Mammary epithelial cell (primary cell): ENCODE measurements at regions of chr7 and their contacts with region 1.

Region 1: DNA sequence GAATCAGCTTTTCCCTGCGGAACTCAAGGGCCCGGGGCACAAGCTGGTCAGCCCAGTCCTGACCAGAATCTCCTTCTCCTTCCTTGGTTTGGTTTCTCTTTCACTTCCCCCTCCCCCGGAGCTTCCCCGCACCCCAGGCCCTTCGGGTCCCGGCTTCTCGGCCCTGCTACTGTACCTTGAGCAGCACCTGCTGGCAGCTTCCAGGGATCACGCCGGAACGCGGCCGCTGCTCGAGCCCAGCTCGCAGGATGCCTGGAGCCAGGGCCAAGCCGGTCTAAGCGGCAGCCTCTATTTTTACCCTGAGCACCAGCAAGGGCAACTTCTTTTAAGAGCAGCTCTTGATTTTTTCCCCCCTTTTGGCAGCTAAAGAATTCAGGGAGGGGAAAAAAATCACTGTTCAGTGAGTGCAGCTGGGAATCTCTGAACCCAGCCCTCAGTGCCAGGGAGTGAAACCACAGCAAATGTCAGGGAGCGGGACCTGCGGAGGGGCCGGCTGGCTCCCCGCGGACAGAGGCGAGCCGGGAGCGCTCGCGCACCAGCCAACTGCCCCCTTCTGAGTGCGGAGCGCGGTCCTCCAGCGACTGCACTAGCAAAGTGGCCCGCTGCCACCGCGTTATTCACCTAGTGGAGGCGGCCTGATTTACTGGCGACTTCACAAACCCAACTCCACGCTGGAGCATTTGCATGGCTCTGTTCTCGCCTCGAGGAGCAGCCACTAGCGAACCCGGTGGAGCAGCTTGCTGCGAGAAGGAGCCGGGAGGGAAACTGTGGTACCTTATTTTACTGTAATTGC is 2.4 kb upstream of the INHBA start:
- DNase-seq: peak; percentile 86
- H3K4me3 ChIP-seq: peak overlapping the region; percentile 48 to 59 (median 51)
- H3K27ac ChIP-seq: peak overlapping the region; percentile 62
- H3K4me1 ChIP-seq: peaks cover 22% of the 10 kb centered on the region
- H3K27me3 ChIP-seq: no peaks in the 10 kb centered on the region
- CTCF ChIP-seq: peak; percentile 75 to 96

Region 2: GRCh38 chr7:40329601-40330153 is 1375.6 kb before region 1 on chr7:
- CTCF ChIA-PET with region 1: no interaction called
- dilution Hi-C with region 1: loop called (anchors 5 kb)
- in situ Hi-C with region 1: loop called (anchors 5 to 10 kb)
- intact Hi-C with region 1: loop called (anchors 1 kb)
- DNase-seq: peak; percentile 49
- H3K4me3 ChIP-seq: no peak overlapping the region
- H3K27ac ChIP-seq: no peak overlapping the region
- H3K4me1 ChIP-seq: no peaks in the 10 kb centered on the region
- H3K27me3 ChIP-seq: no peaks in the 10 kb centered on the region
- CTCF ChIP-seq: peak; percentile 57 to 68

Region 3: DNA sequence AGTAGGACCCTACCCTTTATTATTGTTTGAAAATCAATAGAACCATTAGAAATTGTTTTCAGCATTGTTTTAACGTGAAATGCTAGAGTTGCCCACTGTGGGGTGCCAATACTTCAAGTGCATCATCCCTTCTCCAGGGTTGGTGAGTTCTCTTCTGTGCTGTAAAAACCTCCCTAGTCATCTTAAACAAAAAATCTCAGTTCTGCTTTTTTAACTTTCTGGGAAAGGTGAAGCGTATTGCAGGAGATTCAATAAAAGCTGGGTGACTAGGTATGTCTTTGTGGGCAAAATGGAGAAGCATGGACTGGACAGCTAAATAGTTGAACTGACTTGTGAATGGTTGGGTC is 871.4 kb before region 1 on chr7:
- CTCF ChIA-PET with region 1: no interaction called
- dilution Hi-C with region 1: no loop called
- in situ Hi-C with region 1: loop called in 1 of 2 experiments (anchors 25 kb)
- intact Hi-C with region 1: loop called (anchors 2 kb)
- DNase-seq: no peak
- H3K4me3 ChIP-seq: no peak overlapping the region
- H3K27ac ChIP-seq: no peak overlapping the region
- H3K4me1 ChIP-seq: peaks cover 23% of the 10 kb centered on the region
- H3K27me3 ChIP-seq: no peaks in the 10 kb centered on the region
- CTCF ChIP-seq: peak; percentile 26 to 45

Region 4: DNA sequence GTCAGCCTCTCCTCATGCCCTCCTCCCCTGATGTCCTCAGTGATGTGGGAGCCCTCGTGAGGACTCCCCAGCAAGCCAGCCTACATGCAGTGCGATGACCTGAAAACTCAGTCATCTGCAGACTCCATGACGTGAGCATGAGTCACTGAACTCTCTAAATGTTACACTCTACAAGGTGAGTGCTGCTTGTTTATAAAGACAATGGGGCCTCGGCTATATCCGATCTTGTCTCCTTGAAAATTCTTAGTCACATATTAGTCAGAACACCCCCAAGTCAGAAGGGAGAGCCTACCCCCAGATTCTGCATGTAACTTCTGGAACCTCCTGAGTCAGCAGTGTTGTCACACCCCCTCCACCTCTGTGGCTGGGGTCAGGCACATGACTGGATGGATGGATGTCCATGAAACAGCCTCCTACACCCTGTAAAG is 676.2 kb before region 1 on chr7:
- CTCF ChIA-PET with region 1: no interaction called
- dilution Hi-C with region 1: no loop called
- in situ Hi-C with region 1: no loop called
- intact Hi-C with region 1: loop called (anchors 1 kb)
- DNase-seq: peak; percentile 100
- H3K4me3 ChIP-seq: no peak overlapping the region
- H3K27ac ChIP-seq: peak overlapping the region; percentile 87
- H3K4me1 ChIP-seq: peaks cover 45% of the 10 kb centered on the region
- H3K27me3 ChIP-seq: no peaks in the 10 kb centered on the region
- CTCF ChIP-seq: no peak

Region 5: GRCh38 chr7:41148521-41148951 is 556.8 kb before region 1 on chr7:
- CTCF ChIA-PET with region 1: no interaction called
- dilution Hi-C with region 1: no loop called
- in situ Hi-C with region 1: no loop called
- intact Hi-C with region 1: loop called (anchors 1 kb)
- DNase-seq: peak; percentile 98
- H3K4me3 ChIP-seq: no peak overlapping the region
- H3K27ac ChIP-seq: peak overlapping the region; percentile 99
- H3K4me1 ChIP-seq: peaks cover 46% of the 10 kb centered on the region
- H3K27me3 ChIP-seq: no peaks in the 10 kb centered on the region
- CTCF ChIP-seq: no peak

Region 6: GRCh38 chr7:41599760-41600159 is 105.5 kb before region 1 on chr7:
- CTCF ChIA-PET with region 1: no interaction called
- dilution Hi-C with region 1: no loop called
- in situ Hi-C with region 1: no loop called
- intact Hi-C with region 1: no loop called
- DNase-seq: no peak
- H3K4me3 ChIP-seq: no peak overlapping the region
- H3K27ac ChIP-seq: no peak overlapping the region
- H3K4me1 ChIP-seq: no peaks in the 10 kb centered on the region
- H3K27me3 ChIP-seq: no peaks in the 10 kb centered on the region
- CTCF ChIP-seq: peak in 1 of 2 donors; percentile 28

Region 7: GRCh38 chr7:41870461-41871138 is 165.3 kb after region 1 on chr7:
- CTCF ChIA-PET with region 1: no interaction called
- dilution Hi-C with region 1: no loop called
- in situ Hi-C with region 1: no loop called
- intact Hi-C with region 1: no loop called
- DNase-seq: peak; percentile 75
- H3K4me3 ChIP-seq: no peak overlapping the region
- H3K27ac ChIP-seq: no peak overlapping the region
- H3K4me1 ChIP-seq: peaks cover 15% of the 10 kb centered on the region
- H3K27me3 ChIP-seq: no peaks in the 10 kb centered on the region
- CTCF ChIP-seq: no peak